ENCODE measurements at regions of chr3 and their contacts with region 1.

Region 1: DNA sequence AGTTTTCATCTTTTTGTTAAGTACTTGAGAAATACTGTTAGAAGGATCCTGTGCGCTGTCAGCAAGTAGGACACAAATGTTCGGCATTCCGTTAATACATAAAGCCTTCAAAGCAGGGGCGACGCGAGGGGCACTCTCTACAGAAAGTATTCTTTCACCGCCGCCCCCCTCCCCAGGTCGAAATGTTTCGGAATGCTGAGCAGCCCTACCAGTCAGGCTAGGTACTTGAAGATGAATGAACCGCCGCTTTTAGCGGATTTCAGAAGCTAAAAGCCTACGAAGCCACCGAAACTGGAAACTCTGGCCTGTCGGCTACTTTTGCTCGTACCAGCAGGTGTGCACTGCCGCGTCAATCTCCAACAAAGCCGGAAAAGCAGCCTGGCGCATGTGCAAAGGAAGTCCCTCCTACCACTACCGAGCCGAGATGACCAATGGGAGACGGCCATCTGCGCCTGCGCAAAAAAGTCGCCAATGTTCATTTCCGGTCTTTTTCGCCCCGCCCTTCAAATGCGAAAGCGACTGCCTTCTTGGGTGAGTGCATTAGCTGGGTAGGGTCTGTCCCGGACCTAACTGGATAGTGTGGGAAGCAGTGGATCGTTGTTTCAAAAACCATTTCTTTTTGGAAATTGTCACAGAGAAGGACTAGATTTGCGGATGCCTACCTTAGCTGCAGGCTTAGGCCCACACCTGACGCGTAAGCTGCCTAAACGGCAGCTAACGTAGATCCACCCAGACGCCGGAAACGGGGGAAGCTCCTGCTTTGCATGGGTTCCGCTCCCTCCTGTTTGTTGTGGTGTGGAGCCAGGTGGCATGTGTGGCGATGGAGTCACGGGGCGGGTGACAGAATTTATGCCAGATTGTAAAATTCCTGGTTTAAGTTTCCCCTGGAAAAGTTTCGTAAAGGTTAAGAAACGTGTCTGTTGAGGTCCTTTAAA is at the start of gene WDR5B:
- DNase-seq: peak; percentile 99
- H3K4me3 ChIP-seq: peak within 1 kb of the TSS; percentile 54 to 89 (median 76)
- H3K27ac ChIP-seq: peak within 1 kb of the TSS; percentile 84 to 90 (median 88)
- H3K4me1 ChIP-seq: peaks cover 0 to 31% (median 27%) of the 10 kb centered on the region in 4 donors
- H3K27me3 ChIP-seq: no peaks in the 10 kb centered on the region
- CTCF ChIP-seq: peak in 1 of 4 experiments; percentile 25
- EP300 ChIP-seq: no peak
- POLR2A ChIP-seq: peak; percentile 71 to 76
- total RNA-seq, gene WDR5B: 1.9 to 4.6 (median 2.7) TPM

Region 2: DNA sequence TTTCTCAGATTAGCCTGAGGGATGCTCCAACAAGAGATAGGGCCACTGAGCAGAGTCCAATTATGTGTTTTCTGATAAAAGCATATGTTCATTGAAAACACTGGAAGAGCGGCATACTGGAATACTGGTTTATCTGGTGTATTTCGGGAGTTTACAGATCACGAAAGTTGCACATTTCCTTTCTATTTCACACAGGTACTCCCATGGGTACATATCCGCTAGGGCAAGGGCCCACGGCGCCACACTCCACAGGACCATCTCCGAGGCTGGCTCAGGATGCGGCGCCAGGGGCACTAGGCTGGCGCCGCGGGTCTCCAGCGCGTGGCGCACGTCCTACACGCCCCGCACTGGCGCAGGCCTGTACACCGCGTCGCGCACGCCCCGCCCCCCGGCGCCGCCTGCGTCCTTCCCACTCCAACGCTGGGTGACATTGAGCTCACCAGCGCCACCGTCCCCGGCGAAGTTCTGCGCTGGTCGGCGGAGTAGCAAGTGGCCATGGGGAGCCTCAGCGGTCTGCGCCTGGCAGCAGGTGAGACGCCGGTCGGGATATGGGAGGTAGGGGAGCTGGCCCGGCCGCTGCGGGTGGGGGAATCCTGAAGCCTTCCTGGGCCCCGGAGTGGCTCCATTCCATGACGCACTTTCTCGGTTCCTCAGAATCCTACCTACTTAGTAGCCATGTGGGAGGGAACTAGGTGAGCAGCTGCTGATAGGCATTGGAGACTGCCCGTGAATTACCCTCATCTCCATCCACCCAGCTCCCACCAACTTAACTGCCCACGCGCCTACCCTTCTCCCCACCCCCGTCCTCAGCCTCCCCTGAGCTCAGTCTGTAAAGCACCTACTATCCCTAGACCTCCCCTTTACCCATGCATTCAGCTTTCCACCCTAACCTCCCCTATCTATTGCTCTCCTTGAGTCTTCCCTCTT is 32.0 kb before region 1 on chr3 and contains the start of gene FAM162A:
- intact Hi-C with region 1: loop called (anchors 1 kb)
- DNase-seq: peak; percentile 94
- H3K4me3 ChIP-seq: peak within 1 kb of the TSS; percentile 56 to 76 (median 72)
- H3K27ac ChIP-seq: peak within 1 kb of the TSS; percentile 90 to 93 (median 92)
- H3K4me1 ChIP-seq: peaks cover 0 to 31% (median 26%) of the 10 kb centered on the region in 4 donors
- H3K27me3 ChIP-seq: no peaks in the 10 kb centered on the region
- CTCF ChIP-seq: peak; percentile 20 to 37 (median 27)
- EP300 ChIP-seq: no peak
- POLR2A ChIP-seq: peak; percentile 77 to 86
- total RNA-seq, gene FAM162A: 37.1 to 56.6 (median 45.6) TPM

Region 3: DNA sequence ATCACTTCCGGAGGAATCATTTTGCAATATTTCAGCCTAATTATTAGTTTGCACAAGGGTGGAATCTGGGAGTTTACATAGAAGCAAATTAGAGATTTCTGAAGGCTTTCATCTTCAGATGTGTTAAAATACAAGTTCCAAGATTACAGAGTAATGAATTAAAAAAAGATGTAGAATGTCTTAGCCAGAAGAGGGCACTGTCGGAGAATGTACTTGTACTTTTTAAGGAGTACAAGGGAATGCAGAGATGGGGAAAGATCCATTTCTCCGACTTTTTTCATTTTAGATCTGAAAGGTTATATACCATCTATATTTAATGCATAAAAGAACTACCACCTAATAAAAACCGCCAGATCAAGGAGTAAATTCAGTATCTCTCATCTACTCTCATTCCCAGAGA is 43.0 kb after region 1 on chr3:
- intact Hi-C with region 1: loop called (anchors 5 kb)
- DNase-seq: no peak
- H3K4me3 ChIP-seq: no peak overlapping the region
- H3K27ac ChIP-seq: peak overlapping the region in 1 of 4 donors; percentile 11
- H3K4me1 ChIP-seq: no peaks in the 10 kb centered on the region
- H3K27me3 ChIP-seq: no peaks in the 10 kb centered on the region
- CTCF ChIP-seq: peak in 1 of 4 experiments; percentile 18
- EP300 ChIP-seq: no peak
- POLR2A ChIP-seq: no peak

Region 4: GRCh38 chr3:122514123-122515019 is 98.4 kb after region 1 on chr3 and contains the start of gene KPNA1:
- intact Hi-C with region 1: loop called (anchors 10 kb)
- DNase-seq: peak; percentile 92
- H3K4me3 ChIP-seq: peak within 1 kb of the TSS; percentile 69 to 89 (median 80)
- H3K27ac ChIP-seq: peak within 1 kb of the TSS; percentile 93 to 98 (median 96)
- H3K4me1 ChIP-seq: peaks cover 0 to 37% (median 33%) of the 10 kb centered on the region in 4 donors
- H3K27me3 ChIP-seq: no peaks in the 10 kb centered on the region
- CTCF ChIP-seq: no peak
- EP300 ChIP-seq: no peak
- POLR2A ChIP-seq: peak; percentile 91 to 95
- total RNA-seq, gene KPNA1: 34.9 to 50.1 (median 40.3) TPM

Region 5: GRCh38 chr3:122564155-122564912 is 148.3 kb after region 1 on chr3 and contains the starts of genes DTX3L and PARP9:
- intact Hi-C with region 1: loop called (anchors 5 kb)
- DNase-seq: peak; percentile 93
- H3K4me3 ChIP-seq: peak within 1 kb of the TSS; percentile 69 to 81 (median 74)
- H3K27ac ChIP-seq: peak within 1 kb of the TSS; percentile 90 to 95 (median 92)
- H3K4me1 ChIP-seq: peaks cover 0 to 65% (median 45%) of the 10 kb centered on the region in 4 donors
- H3K27me3 ChIP-seq: no peaks in the 10 kb centered on the region
- CTCF ChIP-seq: no peak
- EP300 ChIP-seq: no peak
- POLR2A ChIP-seq: peak; percentile 52 to 62
- total RNA-seq, gene DTX3L: 18.9 to 32.6 (median 25.0) TPM
- total RNA-seq, gene PARP9: 24.5 to 43.0 (median 35.3) TPM

Region 6: GRCh38 chr3:122938756-122939425 is 522.9 kb after region 1 on chr3:
- intact Hi-C with region 1: no loop called
- DNase-seq: no peak
- H3K4me3 ChIP-seq: no peak overlapping the region
- H3K27ac ChIP-seq: no peak overlapping the region
- H3K4me1 ChIP-seq: peaks cover 0 to 7% (median 4%) of the 10 kb centered on the region in 4 donors
- H3K27me3 ChIP-seq: no peaks in the 10 kb centered on the region
- CTCF ChIP-seq: no peak
- EP300 ChIP-seq: no peak
- POLR2A ChIP-seq: no peak

Measured in sigmoid colon (tissue), 7 donors.